Left ventricle myocardium superior (tissue), 1 donor: ENCODE measurements at regions of chr2 and their contacts with region 1.

Region 1: DNA sequence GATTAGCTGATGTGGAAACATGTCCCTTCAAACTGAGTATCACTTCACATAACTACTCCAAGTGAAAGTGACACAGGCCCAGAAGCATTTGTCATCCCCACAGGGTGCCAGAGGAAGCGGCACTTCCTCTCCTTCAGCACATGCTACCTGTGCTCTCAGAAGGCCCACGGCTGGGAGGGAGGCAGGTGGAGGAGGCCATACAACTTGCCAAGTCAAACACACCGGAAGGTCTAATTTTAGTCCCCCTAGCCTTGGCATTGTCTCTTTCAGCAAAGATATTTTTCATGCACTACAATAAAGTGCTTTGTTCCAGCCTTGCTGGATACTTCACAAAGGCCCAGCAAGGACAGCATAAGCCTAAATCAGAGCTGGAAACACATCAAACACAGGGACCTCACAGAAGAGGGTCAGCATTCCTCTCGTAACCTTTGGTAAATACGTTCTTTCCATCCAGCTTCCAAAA is 38.0 kb downstream of the VSNL1 start:
- DNase-seq: no peak
- ATAC-seq: peak; percentile 72

Region 2: DNA sequence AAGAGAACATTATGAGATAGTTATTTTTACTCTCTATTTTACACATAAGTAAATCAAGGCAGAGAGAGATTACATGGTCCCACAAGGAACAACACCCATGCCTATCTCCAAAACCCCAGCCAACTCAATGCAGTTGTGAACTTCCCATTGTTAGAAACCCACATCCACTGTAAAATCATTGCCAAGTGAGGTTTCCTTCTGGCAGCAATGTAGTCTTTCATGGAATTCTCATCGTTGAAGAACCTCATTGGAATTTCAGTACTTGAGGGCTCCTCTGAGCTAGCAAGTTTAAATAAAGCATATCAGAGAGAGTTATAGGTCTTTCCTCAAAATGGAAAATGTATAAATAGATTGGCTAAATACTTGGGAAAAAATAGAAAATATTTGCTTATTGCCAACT is 165.5 kb before region 1 on chr2:
- intact Hi-C with region 1: no loop called
- DNase-seq: no peak
- ATAC-seq: no peak

Region 3: GRCh38 chr2:17495590-17495989 is 82.9 kb before region 1 on chr2:
- intact Hi-C with region 1: no loop called
- DNase-seq: no peak
- ATAC-seq: no peak

Region 4: DNA sequence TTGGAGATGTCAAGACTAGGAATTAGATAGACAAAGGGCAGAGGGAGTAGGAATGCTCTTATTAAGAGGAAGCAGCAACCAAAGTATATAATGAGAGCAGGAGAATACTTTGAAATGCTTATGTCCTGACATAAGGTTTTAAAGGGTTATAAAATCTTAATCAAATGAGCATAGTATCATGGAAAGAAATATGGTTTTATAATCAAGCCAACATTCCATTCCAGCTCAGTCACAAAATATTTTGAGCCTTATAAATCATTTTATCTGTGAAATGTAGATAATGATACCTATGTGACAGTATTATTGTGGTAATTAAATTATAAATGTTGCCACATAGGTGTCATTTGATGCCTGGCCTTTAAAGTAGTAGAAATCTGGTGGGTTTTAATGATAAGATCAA is 20.4 kb before region 1 on chr2:
- intact Hi-C with region 1: loop called (anchors 2 kb)
- DNase-seq: no peak
- ATAC-seq: no peak